ENCODE measurements at regions of chr6 and their contacts with region 1.

Region 1: DNA sequence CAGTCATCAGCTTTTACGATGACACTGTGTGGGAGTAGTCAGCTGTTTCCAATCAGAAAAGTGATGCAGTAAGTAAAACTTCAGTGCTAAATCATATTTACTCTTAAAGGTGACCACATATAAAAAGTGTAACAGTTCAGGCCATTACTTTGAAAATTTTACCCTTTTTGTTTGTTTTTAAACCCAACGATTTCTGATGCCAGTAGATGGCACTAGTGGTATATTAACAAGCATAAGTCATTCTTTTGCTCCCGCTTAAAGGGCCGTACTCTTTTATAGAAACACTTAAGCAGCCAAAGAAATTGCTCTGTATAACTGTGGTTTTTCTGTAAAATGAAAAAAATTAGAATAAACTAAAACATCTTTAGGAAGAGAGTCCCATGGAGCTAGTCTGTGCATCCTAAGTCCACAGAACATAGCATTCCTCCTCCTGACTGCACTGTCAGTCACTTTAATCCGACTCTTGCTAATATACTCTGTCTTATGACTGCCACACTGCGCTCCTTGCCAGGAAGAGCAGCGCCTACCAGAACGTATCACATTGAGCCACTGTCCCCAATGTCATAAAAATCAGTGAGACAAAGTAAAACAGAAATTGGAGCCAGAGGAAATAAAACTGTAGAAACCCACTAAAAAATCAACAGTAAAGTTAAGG is 25.0 kb downstream of the HEBP2 start:
- DNase-seq: peak; percentile 61 to 84 (median 80)
- H3K4me3 ChIP-seq: no peak overlapping the region
- H3K27ac ChIP-seq: no peak overlapping the region
- H3K4me1 ChIP-seq: peaks cover 0 to 4% (median 2%) of the 10 kb centered on the region in 4 experiments
- H3K27me3 ChIP-seq: no peaks in the 10 kb centered on the region

Region 2: DNA sequence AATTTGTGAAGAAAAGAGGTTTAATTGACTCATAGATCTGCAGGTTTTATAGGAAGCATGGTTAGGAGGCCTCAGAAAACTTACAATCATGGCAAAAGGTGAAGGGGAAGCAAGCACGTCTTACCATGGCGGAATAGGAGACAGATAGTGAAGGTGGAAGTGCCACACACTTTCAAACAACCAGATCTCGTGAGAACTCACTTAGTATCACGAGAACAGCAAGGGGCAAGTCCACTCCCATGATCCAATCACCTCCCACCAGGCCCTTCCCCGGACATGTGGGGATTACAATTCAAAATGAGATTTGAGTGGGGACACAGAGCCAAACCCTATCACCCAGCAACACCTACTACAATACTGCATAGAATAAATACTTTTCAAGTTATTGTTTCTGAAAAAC is 32.4 kb before region 1 on chr6:
- CTCF ChIA-PET with region 1: no interaction called
- POLR2A ChIA-PET with region 1: no interaction called
- DNase-seq: no peak
- H3K4me3 ChIP-seq: no peak overlapping the region
- H3K27ac ChIP-seq: no peak overlapping the region
- H3K4me1 ChIP-seq: peaks cover 0 to 8% (median 0%) of the 10 kb centered on the region in 4 experiments
- H3K27me3 ChIP-seq: no peaks in the 10 kb centered on the region

Region 3: DNA sequence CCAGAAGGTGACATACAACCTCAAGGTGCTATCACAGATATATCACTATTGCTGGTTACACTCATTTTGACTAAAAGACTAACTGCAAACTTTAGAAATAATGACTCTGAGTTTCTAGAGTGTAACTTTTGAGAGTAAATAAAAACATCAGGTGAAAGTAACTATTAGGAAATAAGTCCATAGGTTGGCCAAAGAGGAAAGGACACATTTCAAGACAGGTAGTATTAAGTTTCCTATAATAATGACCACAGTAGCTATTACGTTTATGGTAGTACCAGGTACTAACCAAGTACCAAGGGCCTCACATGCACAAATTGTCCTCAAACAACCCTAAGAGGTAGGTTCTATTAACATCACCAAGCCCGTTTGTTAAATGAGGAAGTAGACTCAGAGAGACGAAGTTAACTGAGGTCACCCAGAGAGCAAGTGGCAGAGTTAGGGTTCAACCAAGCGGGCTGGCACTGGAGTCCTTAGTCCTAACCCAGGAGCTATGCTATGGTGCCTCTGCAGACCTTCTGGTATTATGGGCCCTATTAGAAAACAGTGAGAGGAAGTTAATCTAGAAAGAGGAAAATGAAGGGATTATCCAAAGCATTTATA is 11.8 kb after region 1 on chr6:
- CTCF ChIA-PET with region 1: interaction called, 27 read pairs
- POLR2A ChIA-PET with region 1: no interaction called
- DNase-seq: peak in 2 of 3 donors; percentile 47 to 70
- H3K4me3 ChIP-seq: no peak overlapping the region
- H3K27ac ChIP-seq: no peak overlapping the region
- H3K4me1 ChIP-seq: peaks cover 0 to 17% (median 4%) of the 10 kb centered on the region in 4 experiments
- H3K27me3 ChIP-seq: no peaks in the 10 kb centered on the region

Region 4: DNA sequence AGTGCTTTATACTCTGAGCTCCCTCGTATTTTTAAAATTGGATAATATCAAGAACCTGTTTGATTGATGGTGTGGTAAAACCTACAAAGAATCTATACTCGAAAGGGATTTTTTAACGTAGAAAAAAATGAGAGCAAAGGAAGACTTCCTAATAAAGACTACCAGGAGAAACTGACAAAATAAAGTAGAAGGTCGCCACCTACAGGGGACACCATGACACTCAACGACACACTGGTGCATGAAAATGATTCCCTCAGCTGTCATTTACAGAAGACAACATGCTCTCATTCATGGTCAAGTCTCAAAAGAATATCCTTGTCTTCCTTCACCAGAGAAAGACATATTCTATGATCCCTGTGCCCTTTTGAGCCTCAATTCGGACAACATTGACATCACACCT is 80.3 kb after region 1 on chr6:
- CTCF ChIA-PET with region 1: interaction called, 133 read pairs
- POLR2A ChIA-PET with region 1: no interaction called
- DNase-seq: peak; percentile 55 to 62 (median 59)
- H3K4me3 ChIP-seq: peak overlapping the region in 1 of 7 experiments; percentile 8
- H3K27ac ChIP-seq: no peak overlapping the region
- H3K4me1 ChIP-seq: peaks cover 0 to 7% (median 3%) of the 10 kb centered on the region in 4 experiments
- H3K27me3 ChIP-seq: no peaks in the 10 kb centered on the region

Region 5: DNA sequence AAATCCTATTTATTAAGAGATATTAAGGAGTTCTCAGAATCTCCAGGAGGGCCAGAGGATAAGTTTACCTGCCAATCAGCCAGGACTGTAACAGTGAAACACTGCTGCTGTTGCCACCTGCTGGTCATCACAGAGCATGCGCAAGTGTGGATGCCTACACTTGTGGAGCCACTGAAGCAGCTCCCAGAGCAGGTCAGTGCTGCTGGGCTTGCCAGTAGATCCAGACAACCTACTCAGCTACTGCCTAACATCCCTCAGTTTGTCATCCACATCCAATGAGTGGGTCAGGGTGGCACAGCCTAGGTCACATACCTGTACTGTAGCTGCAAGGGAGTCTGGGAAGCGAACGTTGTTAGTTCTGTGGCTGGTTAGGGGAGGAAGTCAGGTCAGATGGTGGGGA is 88.6 kb after region 1 on chr6:
- CTCF ChIA-PET with region 1: interaction called, 133 read pairs
- POLR2A ChIA-PET with region 1: no interaction called
- DNase-seq: peak; percentile 34 to 53 (median 45)
- H3K4me3 ChIP-seq: no peak overlapping the region
- H3K27ac ChIP-seq: no peak overlapping the region
- H3K4me1 ChIP-seq: peaks cover 7 to 26% (median 17%) of the 10 kb centered on the region in 4 experiments
- H3K27me3 ChIP-seq: no peaks in the 10 kb centered on the region

Region 6: DNA sequence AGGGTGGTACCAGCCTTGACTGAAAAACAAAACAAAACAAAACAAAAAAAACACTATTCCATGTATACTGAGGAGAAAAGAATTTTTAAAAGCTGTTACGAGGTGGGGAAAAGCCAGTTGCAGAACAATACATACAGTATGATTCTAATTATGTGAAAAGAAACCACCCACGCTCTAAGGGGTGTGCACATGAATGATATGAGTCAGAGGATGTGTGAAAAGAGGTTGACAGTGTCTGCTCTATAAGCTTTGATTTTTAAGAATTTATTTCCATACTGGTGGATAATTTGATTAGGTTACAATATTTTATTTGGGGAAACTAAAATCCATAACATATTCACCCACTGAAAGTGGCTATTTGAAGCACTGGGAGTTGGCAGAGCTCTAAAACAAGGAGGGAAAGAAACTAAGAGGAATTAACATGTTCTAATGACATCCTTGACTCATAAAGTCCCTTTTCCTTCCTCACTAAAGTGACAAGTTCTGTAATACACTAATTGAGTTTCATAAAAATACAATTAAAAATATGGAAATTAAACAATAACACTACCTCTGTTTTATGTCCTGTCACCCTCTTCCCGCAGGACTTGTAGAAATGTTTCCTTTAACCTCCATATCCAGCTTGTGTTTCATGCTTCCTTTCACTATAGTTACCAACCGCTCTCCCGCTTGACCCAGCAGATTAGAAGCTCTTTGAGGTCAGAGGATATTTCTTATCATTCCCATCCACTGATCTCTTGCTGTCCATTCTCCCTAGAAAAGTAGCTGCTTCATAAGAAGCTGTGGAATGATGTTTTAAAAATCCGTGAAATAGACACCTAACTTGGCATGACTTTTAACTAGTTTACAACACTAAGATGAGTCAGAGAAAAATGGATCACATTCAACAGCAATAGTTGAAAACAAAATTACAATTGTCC is 225.9 kb after region 1 on chr6:
- CTCF ChIA-PET with region 1: no interaction called
- POLR2A ChIA-PET with region 1: no interaction called
- DNase-seq: peak in 2 of 3 donors; percentile 23 to 47
- H3K4me3 ChIP-seq: no peak overlapping the region
- H3K27ac ChIP-seq: no peak overlapping the region
- H3K4me1 ChIP-seq: peaks cover 0 to 10% (median 2%) of the 10 kb centered on the region in 4 experiments
- H3K27me3 ChIP-seq: no peaks in the 10 kb centered on the region

Region 7: DNA sequence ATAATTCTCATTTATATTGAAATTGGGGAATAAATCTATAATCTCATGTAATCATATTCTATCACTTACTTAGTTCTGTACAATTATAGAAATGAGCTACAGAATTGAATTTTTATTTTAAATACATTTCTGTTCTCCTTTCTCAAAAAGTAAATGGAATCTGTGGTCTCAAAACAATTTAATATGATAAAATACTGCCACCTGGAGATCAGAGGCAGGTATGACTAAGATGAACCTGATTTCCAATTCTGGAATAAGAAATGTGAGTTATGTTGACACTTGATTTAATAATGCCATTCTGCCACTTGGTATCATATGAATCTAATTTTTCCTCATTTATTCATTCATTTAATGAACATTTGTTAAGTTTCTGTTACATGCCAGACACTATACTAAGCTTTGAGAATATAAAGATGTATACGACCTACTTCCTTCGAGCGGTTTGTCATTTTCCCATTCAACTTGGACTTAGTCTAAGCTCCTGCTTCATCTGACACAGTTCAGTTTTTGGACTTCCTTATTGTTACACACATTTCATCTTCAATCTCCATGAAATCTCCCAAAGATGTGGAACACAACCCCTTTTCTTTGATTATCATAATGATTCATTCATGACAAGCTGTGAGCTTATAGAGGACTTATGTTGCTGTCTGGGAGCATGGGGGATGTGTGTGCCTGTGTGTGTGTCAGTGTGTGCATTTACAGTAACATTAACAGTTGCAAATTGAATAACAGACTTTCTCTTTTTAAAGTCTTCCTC is 337.0 kb after region 1 on chr6:
- CTCF ChIA-PET with region 1: interaction called, 47 read pairs
- POLR2A ChIA-PET with region 1: no interaction called
- DNase-seq: peak; percentile 49 to 79 (median 73)
- H3K4me3 ChIP-seq: no peak overlapping the region
- H3K27ac ChIP-seq: no peak overlapping the region
- H3K4me1 ChIP-seq: peaks cover 6 to 24% (median 17%) of the 10 kb centered on the region in 4 experiments
- H3K27me3 ChIP-seq: no peaks in the 10 kb centered on the region

Region 8: GRCh38 chr6:138979813-138980668 is 551.0 kb after region 1 on chr6:
- CTCF ChIA-PET with region 1: no interaction called
- POLR2A ChIA-PET with region 1: no interaction called
- DNase-seq: no peak
- H3K4me3 ChIP-seq: no peak overlapping the region
- H3K27ac ChIP-seq: no peak overlapping the region
- H3K4me1 ChIP-seq: peaks cover 0 to 13% (median 4%) of the 10 kb centered on the region in 4 experiments
- H3K27me3 ChIP-seq: no peaks in the 10 kb centered on the region

Region 9: GRCh38 chr6:139091826-139092225 is 662.8 kb after region 1 on chr6:
- CTCF ChIA-PET with region 1: no interaction called
- POLR2A ChIA-PET with region 1: no interaction called
- DNase-seq: no peak
- H3K4me3 ChIP-seq: no peak overlapping the region
- H3K27ac ChIP-seq: no peak overlapping the region
- H3K4me1 ChIP-seq: no peaks in the 10 kb centered on the region
- H3K27me3 ChIP-seq: no peaks in the 10 kb centered on the region